B cell (primary cell): ENCODE measurements at regions of chr13 and their contacts with region 1.

Region 1: DNA sequence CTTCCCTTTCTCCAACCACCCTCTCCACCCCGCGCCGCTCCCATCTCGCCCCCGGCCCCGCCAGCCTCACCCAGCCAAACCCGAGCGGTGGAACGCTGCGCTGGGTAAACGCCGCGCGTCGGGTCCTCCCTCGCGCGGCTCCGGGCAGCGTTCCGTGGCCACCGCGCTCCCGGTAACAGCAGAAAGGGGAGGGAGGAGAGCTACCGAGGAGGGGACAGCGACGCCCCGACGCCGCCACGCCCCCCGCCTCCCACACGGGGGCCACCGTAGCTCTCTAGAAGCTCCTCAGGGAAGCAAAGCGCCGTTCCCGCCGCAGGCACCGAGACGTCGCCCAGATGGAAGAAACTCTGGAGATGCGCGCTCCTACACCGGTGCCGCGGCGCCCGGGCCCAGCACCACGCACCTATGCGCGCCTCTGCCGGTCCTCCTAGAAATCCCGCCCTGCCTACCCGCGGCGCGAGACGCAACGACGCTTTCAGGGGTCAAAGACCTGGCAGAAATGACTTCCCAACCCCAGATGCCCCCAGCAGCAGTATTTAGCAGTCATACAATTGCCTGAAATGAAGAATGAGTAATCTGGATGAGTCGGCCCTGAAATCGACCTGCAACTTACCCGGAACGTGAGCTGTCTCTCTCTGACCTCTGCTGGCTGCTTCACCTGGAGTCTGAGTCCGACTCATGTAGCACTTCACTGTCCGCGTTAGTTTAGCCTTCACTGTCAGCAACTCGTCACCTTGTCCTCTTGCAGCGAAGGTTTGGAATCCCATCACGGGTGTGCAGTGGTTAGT is at the start of gene RUBCNL:
- DNase-seq: peak; percentile 82
- ATAC-seq: peak; percentile 46
- H3K4me3 ChIP-seq: peak within 1 kb of the TSS; percentile 74 to 95 (median 90)
- H3K4me3 Mint-ChIP-seq: peak within 1 kb of the TSS; percentile 92
- H3K27ac ChIP-seq: peak within 1 kb of the TSS; percentile 83 to 84
- H3K27ac Mint-ChIP-seq: peak within 1 kb of the TSS; percentile 84
- H3K4me1 ChIP-seq: peaks cover 53 to 57% of the 10 kb centered on the region in 2 donors
- H3K4me1 Mint-ChIP-seq: peaks cover 55% of the 10 kb centered on the region
- H3K27me3 ChIP-seq: no peaks in the 10 kb centered on the region
- H3K27me3 Mint-ChIP-seq: no peaks in the 10 kb centered on the region
- CTCF ChIP-seq: no peak
- total RNA-seq, gene RUBCNL: 370 and 392 TPM in 2 replicates

Region 2: GRCh38 chr13:45807520-45808099 is 579.6 kb before region 1 on chr13:
- CTCF ChIA-PET with region 1: no interaction called
- POLR2A ChIA-PET with region 1: no interaction called
- intact Hi-C with region 1: no loop called
- DNase-seq: peak; percentile 29
- ATAC-seq: no peak
- H3K4me3 ChIP-seq: no peak overlapping the region
- H3K4me3 Mint-ChIP-seq: no peak overlapping the region
- H3K27ac ChIP-seq: no peak overlapping the region
- H3K27ac Mint-ChIP-seq: no peak overlapping the region
- H3K4me1 ChIP-seq: no peaks in the 10 kb centered on the region
- H3K4me1 Mint-ChIP-seq: no peaks in the 10 kb centered on the region
- H3K27me3 ChIP-seq: no peaks in the 10 kb centered on the region
- H3K27me3 Mint-ChIP-seq: peaks cover 3% of the 10 kb centered on the region
- CTCF ChIP-seq: no peak

Region 3: GRCh38 chr13:46341112-46341711 is 46.0 kb before region 1 on chr13:
- CTCF ChIA-PET with region 1: interaction called, 5 read pairs
- POLR2A ChIA-PET with region 1: no interaction called
- intact Hi-C with region 1: loop called (anchors 5 kb)
- DNase-seq: peak; percentile 35
- ATAC-seq: peak; percentile 54
- H3K4me3 ChIP-seq: no peak overlapping the region
- H3K4me3 Mint-ChIP-seq: peak overlapping the region; percentile 60
- H3K27ac ChIP-seq: peak overlapping the region; percentile 72 to 80
- H3K27ac Mint-ChIP-seq: peak overlapping the region; percentile 75
- H3K4me1 ChIP-seq: peaks cover 35 to 44% of the 10 kb centered on the region in 2 donors
- H3K4me1 Mint-ChIP-seq: peaks cover 68% of the 10 kb centered on the region
- H3K27me3 ChIP-seq: no peaks in the 10 kb centered on the region
- H3K27me3 Mint-ChIP-seq: no peaks in the 10 kb centered on the region
- CTCF ChIP-seq: no peak

Region 4: DNA sequence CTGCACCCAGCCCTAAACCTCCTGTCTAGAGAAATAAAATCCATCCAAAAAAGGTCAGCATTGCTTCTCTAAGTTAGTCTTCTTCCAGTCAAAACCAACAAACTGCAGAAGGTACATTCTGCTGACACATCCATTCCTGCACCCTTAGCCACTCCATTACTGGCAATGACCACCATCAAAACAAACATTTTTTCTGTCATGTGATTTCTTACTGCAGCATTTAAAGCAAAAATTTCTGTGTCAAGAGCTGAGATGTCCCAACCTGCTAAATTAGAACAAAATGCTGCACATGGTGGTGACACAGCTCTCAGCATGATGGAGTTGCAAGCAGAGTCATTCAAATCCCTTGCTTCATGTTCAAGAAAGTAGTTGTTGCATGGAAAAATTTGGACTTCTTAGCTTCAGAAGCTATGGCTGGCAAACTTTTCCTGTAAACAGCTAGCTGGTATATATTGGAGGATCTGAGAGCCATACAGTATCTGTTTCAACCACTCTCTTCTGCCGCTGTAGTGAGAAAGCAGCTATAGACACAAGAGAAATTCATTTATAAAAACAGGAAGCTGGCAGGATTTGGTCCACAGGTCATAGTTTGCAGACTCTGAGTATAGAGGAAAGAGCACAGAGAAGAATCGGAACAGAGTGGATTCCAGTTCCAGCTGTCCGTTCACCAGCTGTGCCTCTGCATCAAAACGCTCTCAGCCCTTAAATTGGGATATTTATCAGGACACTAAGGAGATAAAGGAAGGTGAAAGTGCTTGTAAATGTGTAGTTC is 17.6 kb before region 1 on chr13:
- CTCF ChIA-PET with region 1: interaction called, 113 read pairs
- POLR2A ChIA-PET with region 1: interaction called, 50 read pairs
- intact Hi-C with region 1: loop called (anchors 1 kb)
- DNase-seq: peak; percentile 65
- ATAC-seq: peak; percentile 48
- H3K4me3 ChIP-seq: peak overlapping the region; percentile 13 to 56 (median 42)
- H3K4me3 Mint-ChIP-seq: peak overlapping the region; percentile 78
- H3K27ac ChIP-seq: peak overlapping the region; percentile 59 to 84
- H3K27ac Mint-ChIP-seq: peak overlapping the region; percentile 82
- H3K4me1 ChIP-seq: peaks cover 68 to 73% of the 10 kb centered on the region in 2 donors
- H3K4me1 Mint-ChIP-seq: peaks cover 81% of the 10 kb centered on the region
- H3K27me3 ChIP-seq: no peaks in the 10 kb centered on the region
- H3K27me3 Mint-ChIP-seq: no peaks in the 10 kb centered on the region
- CTCF ChIP-seq: no peak

Region 5: GRCh38 chr13:46403851-46404732 is 16.8 kb after region 1 on chr13:
- CTCF ChIA-PET with region 1: interaction called, 7 read pairs
- POLR2A ChIA-PET with region 1: interaction called, 16 read pairs
- intact Hi-C with region 1: loop called (anchors 2 kb)
- DNase-seq: no peak
- ATAC-seq: no peak
- H3K4me3 ChIP-seq: no peak overlapping the region
- H3K4me3 Mint-ChIP-seq: peak overlapping the region; percentile 5
- H3K27ac ChIP-seq: peak overlapping the region in 1 of 2 donors; percentile 8
- H3K27ac Mint-ChIP-seq: peak overlapping the region; percentile 37
- H3K4me1 ChIP-seq: peaks cover 45 to 54% of the 10 kb centered on the region in 2 donors
- H3K4me1 Mint-ChIP-seq: peaks cover 55% of the 10 kb centered on the region
- H3K27me3 ChIP-seq: no peaks in the 10 kb centered on the region
- H3K27me3 Mint-ChIP-seq: no peaks in the 10 kb centered on the region
- CTCF ChIP-seq: no peak

Region 6: DNA sequence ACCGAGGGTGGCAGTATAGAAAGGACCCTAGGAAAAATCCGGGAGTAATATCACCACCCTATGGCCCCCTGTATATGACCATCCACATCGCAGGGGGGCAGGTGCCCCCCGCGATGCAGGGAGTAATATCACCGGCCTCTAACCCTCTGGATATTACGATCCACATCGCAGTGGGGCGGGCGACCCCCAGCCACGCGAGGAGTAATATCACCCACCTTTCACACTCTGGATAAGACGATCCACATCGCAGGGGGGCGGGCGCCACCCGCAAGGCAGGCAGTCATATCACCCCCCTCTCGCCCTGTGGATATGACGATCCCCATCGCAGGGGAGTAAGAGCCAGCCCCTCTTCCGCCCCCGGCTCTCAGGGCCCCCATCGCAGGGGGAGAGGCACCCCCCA is 76.5 kb after region 1 on chr13:
- CTCF ChIA-PET with region 1: no interaction called
- POLR2A ChIA-PET with region 1: no interaction called
- intact Hi-C with region 1: loop called (anchors 5 kb)
- DNase-seq: no peak
- ATAC-seq: no peak
- H3K4me3 ChIP-seq: no peak overlapping the region
- H3K4me3 Mint-ChIP-seq: no peak overlapping the region
- H3K27ac ChIP-seq: no peak overlapping the region
- H3K27ac Mint-ChIP-seq: no peak overlapping the region
- H3K4me1 ChIP-seq: no peaks in the 10 kb centered on the region
- H3K4me1 Mint-ChIP-seq: no peaks in the 10 kb centered on the region
- H3K27me3 ChIP-seq: no peaks in the 10 kb centered on the region
- H3K27me3 Mint-ChIP-seq: no peaks in the 10 kb centered on the region
- CTCF ChIP-seq: no peak

Region 7: GRCh38 chr13:46668302-46668720 is 281.1 kb after region 1 on chr13:
- CTCF ChIA-PET with region 1: no interaction called
- POLR2A ChIA-PET with region 1: no interaction called
- intact Hi-C with region 1: loop called (anchors 10 kb)
- DNase-seq: no peak
- ATAC-seq: peak; percentile 26
- H3K4me3 ChIP-seq: peak overlapping the region; percentile 36 to 69 (median 58)
- H3K4me3 Mint-ChIP-seq: peak overlapping the region; percentile 87
- H3K27ac ChIP-seq: peak overlapping the region; percentile 81 to 89
- H3K27ac Mint-ChIP-seq: peak overlapping the region; percentile 82
- H3K4me1 ChIP-seq: peaks cover 41 to 42% of the 10 kb centered on the region in 2 donors
- H3K4me1 Mint-ChIP-seq: peaks cover 68% of the 10 kb centered on the region
- H3K27me3 ChIP-seq: no peaks in the 10 kb centered on the region
- H3K27me3 Mint-ChIP-seq: no peaks in the 10 kb centered on the region
- CTCF ChIP-seq: no peak

Region 8: GRCh38 chr13:46983881-46984280 is 596.6 kb after region 1 on chr13:
- CTCF ChIA-PET with region 1: no interaction called
- POLR2A ChIA-PET with region 1: no interaction called
- intact Hi-C with region 1: loop called (anchors 10 kb)
- DNase-seq: peak; percentile 69
- ATAC-seq: peak; percentile 51
- H3K4me3 ChIP-seq: peak overlapping the region in 2 of 5 experiments; percentile 12 to 52
- H3K4me3 Mint-ChIP-seq: peak overlapping the region; percentile 82
- H3K27ac ChIP-seq: peak overlapping the region; percentile 33 to 44
- H3K27ac Mint-ChIP-seq: peak overlapping the region; percentile 84
- H3K4me1 ChIP-seq: peaks cover 25 to 26% of the 10 kb centered on the region in 2 donors
- H3K4me1 Mint-ChIP-seq: peaks cover 26% of the 10 kb centered on the region
- H3K27me3 ChIP-seq: no peaks in the 10 kb centered on the region
- H3K27me3 Mint-ChIP-seq: peaks cover 2% of the 10 kb centered on the region
- CTCF ChIP-seq: no peak